Cardiac septum (tissue), 1 donor: ENCODE measurements at regions of chr6 and their contacts with region 1.

Region 1: GRCh38 chr6:27078734-27079357 is 168.7 kb upstream of the PRSS16 start:
- DNase-seq: no peak

Region 2: DNA sequence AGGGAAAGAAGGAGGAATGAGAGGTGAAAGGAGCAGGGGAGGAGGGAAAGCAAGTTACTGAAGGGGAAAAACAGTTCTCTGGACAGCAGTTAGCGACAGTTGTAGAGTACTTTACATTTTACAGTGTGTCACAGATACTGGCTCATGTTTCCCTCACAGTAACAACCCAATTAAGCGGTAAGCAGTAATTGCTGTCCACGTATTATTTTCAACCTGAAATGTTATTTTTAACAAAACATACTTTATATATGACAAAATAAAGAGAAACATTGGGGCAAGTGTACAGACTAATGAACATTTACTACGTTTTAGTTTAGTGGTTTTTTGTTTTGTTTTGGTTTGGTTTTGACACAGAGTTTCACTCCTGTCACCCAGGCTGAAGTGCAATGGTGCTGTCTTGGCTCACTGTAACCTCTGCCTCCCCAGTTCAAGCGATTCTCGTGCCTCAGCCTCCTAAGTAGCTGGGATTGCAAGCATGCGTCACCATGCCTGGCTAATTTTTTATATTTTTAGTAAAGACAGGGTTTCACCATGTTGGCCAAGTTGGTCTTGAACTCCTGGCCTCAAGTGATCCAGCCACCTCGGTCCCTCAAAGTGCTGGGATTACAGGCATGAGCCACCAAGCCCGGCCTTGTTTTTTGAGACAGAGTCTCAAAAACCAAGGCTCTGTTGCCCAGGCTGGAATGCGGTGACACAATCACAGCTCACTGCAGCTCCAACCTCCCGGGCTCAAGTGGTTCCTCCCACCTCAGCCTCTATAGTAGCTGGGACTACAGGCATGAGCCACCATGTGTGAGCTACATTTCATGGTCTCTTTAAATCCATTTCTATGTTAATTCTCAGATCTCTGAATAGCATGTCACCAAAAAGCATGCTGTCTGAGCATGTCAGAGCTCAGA is 736.5 kb before region 1 on chr6:
- intact Hi-C with region 1: loop called (anchors 5 kb)
- DNase-seq: no peak

Region 3: DNA sequence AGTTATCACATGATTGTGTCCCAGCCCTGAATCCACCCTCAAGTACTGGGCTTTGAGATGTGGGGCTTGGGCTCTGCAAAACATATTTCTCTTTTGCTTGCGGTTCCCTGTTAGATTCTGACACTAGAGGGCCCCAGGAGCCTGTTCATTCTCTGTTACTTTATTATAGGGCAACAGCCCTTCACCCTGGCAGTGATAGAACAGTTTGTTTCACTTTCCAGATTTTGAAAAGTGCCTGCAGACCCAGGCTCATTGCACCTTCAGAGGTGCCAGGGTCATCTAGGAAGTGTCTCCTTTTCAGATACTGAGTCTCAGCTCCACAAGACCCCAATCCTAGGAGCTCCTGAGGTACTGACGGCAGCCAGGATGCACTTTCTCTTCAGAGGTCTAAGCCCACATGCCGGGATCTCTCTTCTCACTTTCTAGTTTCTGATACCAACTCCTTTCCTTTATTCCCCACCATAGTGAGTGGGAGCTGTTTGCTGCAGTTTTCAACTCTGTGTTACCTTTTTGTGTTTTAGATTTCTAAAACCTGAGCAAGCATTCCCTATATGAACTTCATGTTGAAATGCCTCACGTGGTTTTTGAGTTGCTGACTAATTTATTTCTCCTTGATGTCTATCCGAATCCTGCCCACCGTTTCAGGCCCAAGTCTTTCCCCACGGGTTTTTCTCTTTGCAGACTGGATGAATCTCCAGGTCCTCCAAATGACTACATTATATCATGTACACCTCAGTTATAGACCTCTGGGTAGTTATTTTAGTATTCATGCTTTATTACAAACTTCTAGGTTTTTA is 471.2 kb before region 1 on chr6:
- intact Hi-C with region 1: loop called (anchors 2 kb)
- DNase-seq: no peak

Region 4: GRCh38 chr6:27237089-27237803 is 158.4 kb after region 1 on chr6:
- intact Hi-C with region 1: no loop called
- DNase-seq: no peak

Region 5: DNA sequence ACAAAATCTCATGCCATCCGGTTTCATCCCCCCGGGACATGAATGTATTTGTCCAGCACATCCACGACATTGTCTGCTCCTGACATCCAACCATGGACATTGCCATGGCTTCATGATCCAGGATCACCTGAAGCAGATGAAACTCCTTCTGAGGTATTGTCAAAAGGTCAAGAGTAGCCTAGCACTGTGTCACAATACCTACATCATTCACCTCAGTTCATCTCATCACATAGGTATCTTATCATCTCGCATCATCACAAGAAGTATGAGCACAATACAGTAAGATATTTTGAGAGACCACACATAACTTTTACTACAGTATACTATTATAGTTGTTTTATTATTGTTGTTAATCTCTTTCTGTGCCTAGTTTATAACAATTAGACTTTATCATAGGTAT is 360.5 kb after region 1 on chr6:
- intact Hi-C with region 1: no loop called
- DNase-seq: no peak